ENCODE measurements at regions of chr20 and their contacts with region 1.

Region 1: GRCh38 chr20:59850018-59850641 is 83.3 kb downstream of the SYCP2 start:
- DNase-seq: peak; percentile 38 to 64 (median 58)
- H3K4me3 ChIP-seq: no peak overlapping the region
- H3K27ac ChIP-seq: no peak overlapping the region
- H3K4me1 ChIP-seq: no peaks in the 10 kb centered on the region
- H3K27me3 ChIP-seq: peaks cover 0 to 5% (median 0%) of the 10 kb centered on the region in 5 experiments

Region 2: DNA sequence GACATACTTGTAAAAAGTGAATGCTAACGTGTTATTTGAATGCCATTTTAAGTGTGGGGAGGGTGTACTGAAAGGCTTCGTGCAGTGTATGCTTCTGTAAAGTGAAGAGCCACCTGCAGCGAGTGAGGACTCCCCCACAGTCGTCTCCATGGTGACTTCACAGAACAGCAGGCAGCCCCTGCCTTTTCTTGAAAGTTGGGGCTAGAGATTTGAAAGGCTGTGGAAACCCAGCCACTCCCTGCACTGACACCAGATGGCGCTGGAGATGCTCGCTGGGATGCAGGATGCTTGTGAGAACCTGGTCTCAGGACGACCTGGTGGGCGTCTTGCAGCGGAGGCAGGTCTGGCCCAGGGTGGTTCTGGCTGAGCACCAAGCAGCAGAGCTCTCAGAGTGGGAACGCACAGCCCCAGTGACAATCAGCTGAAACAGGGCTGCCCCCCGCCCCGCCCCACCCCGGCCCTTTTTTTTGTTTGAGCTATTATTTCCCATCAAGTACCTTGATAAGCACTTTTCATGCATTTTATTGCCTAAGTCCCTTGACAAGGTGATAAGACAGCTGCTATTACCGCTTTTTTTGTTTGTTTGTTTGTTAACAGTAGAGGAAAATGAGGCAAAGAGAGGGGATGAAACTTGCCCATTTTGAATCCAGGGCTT is 67.0 kb before region 1 on chr20:
- CTCF ChIA-PET with region 1: interaction called, 20 read pairs
- POLR2A ChIA-PET with region 1: no interaction called
- DNase-seq: peak; percentile 50 to 67 (median 64)
- H3K4me3 ChIP-seq: no peak overlapping the region
- H3K27ac ChIP-seq: no peak overlapping the region
- H3K4me1 ChIP-seq: no peaks in the 10 kb centered on the region
- H3K27me3 ChIP-seq: peaks cover 0 to 14% (median 0%) of the 10 kb centered on the region in 5 experiments

Region 3: DNA sequence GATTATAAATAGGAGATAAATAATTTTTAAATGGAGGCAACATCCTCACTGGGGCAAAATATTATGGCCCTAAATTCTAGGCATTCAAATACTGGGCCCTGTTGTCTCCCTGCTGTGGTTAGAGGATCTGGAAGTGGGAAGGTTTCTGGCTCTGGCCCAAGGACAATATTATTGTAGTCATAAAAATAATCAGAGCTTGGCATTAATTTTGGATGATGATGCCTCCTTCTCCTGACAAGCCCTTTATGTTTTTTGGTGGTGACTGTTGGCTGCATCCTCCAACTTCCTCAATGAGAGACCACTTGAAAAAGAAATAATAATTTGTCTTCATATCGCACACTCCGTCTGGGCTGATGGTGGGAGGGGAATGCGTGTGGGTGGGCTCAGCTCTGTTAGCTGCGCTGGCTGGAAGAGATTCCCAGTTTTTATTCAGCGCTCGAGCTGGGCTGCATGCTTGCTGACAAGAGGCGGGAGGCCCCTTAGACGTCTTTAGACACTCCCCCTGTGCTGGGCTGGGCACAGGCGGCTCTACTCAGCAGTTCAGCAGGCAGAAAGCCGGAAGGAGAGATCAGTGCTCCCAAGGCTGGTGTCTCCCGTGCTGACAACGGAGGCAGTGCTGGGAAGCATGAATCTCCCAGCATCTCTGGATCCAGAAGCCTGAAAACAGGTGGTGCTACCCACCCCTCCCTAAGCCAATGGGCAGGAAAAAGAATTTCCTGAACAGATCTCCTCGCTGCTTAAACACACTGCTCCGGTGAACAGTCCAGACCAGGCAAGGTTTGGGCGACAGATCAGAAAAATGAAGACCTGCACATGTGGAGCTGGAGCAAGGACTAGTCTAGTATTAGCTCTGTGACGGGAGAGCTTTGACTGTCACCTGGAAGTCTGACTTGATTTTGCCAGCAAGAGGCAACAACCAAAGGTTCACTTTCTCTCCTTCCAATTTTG is 14.4 kb before region 1 on chr20:
- CTCF ChIA-PET with region 1: interaction called, 10 read pairs
- POLR2A ChIA-PET with region 1: no interaction called
- DNase-seq: peak; percentile 14 to 68 (median 53)
- H3K4me3 ChIP-seq: peak overlapping the region in 5 of 7 experiments; percentile 25 to 67 (median 47)
- H3K27ac ChIP-seq: no peak overlapping the region
- H3K4me1 ChIP-seq: peaks cover 0 to 10% (median 4%) of the 10 kb centered on the region in 4 experiments
- H3K27me3 ChIP-seq: peaks cover 0 to 30% (median 7%) of the 10 kb centered on the region in 5 experiments